ENCODE measurements at regions of chr10 and their contacts with region 1.

Region 1: DNA sequence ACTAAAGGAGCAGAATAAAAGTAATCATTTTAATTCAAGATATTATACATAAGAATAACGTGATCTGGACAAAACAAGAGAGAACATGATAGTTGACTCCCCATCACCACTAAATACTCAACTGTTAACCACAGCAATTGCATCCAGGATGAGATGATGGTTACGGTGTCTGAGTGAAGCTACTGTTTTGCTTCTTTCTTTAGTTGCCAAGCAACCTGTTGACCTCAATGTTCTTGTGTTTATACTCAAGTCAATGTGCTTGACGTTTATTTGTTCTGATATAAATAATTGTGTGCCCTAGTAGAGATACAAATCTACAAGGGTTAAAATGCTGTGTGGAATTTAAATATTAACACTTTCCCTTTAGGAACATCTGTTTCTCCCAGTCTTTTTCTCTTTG is 31.4 kb upstream of the MPP7 start:
- DNase-seq: no peak
- H3K4me3 Mint-ChIP-seq: no peak overlapping the region
- H3K27ac Mint-ChIP-seq: no peak overlapping the region
- H3K4me1 Mint-ChIP-seq: no peaks in the 10 kb centered on the region
- H3K27me3 Mint-ChIP-seq: no peaks in the 10 kb centered on the region
- CTCF ChIP-seq: no peak

Region 2: GRCh38 chr10:27625452-27626211 is 708.7 kb before region 1 on chr10:
- CTCF ChIA-PET with region 1: no interaction called
- intact Hi-C with region 1: no loop called
- DNase-seq: no peak
- H3K4me3 Mint-ChIP-seq: no peak overlapping the region
- H3K27ac Mint-ChIP-seq: no peak overlapping the region
- H3K4me1 Mint-ChIP-seq: no peaks in the 10 kb centered on the region
- H3K27me3 Mint-ChIP-seq: peaks cover 53% of the 10 kb centered on the region
- CTCF ChIP-seq: no peak

Region 3: GRCh38 chr10:27736396-27736795 is 597.9 kb before region 1 on chr10:
- CTCF ChIA-PET with region 1: no interaction called
- intact Hi-C with region 1: no loop called
- DNase-seq: no peak
- H3K4me3 Mint-ChIP-seq: no peak overlapping the region
- H3K27ac Mint-ChIP-seq: no peak overlapping the region
- H3K4me1 Mint-ChIP-seq: no peaks in the 10 kb centered on the region
- H3K27me3 Mint-ChIP-seq: peaks cover 24% of the 10 kb centered on the region
- CTCF ChIP-seq: no peak

Region 4: GRCh38 chr10:28355376-28355775 is 21.1 kb after region 1 on chr10:
- CTCF ChIA-PET with region 1: no interaction called
- intact Hi-C with region 1: no loop called
- DNase-seq: no peak
- H3K4me3 Mint-ChIP-seq: no peak overlapping the region
- H3K27ac Mint-ChIP-seq: no peak overlapping the region
- H3K4me1 Mint-ChIP-seq: peaks cover 20% of the 10 kb centered on the region
- H3K27me3 Mint-ChIP-seq: no peaks in the 10 kb centered on the region
- CTCF ChIP-seq: no peak

Region 5: DNA sequence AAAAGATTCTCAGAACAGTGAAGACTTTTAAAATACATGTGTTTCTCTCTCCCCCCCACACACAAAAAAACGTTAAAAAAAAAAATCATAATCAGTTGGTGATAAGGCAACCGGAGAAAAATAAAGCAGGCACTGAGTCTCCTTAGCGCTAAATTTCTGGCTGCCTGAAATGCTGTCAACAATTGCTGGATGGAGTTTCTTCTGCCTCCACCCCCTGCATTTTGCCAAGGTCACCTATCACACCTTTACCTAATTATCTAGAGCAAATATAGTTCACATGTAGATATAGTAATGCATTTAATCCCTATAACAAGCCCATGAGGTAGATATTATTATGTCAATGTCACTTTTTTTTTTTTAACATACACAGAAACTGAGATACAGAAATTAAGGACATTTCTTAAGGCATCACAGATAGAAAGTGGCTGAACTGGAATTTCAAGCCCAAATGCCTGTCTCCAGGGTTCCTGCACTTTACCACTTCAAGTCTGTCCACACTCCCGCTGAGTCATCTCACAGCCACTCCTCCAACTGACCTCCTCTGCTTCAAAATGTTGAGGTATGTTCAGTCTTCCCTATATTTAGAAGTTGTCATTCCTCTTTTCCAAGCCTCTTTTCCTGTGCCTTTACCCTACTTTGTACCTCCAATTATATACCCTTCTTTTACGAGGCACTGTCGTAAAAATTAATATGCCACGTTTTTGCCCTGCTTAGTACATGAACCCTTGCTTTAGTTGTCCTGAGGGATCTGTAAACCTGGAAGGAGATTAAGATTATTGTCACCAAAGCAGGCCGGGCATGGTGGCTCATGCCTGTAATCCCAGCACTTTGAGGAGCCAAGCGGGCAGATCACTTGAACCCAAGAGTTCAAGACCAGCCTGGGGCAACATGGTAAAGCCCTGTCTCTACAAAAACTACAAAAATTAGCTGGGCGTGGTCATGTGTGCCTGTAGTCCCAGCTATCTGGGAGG is 41.4 kb after region 1 on chr10:
- CTCF ChIA-PET with region 1: interaction called, 3 read pairs
- intact Hi-C with region 1: loop called (anchors 5 kb)
- DNase-seq: peak; percentile 76
- H3K4me3 Mint-ChIP-seq: peak overlapping the region; percentile 33
- H3K27ac Mint-ChIP-seq: peak overlapping the region; percentile 28
- H3K4me1 Mint-ChIP-seq: peaks cover 23% of the 10 kb centered on the region
- H3K27me3 Mint-ChIP-seq: no peaks in the 10 kb centered on the region
- CTCF ChIP-seq: no peak

Measured in Calu3 (cell line).